Head of caudate nucleus (tissue), 42 donors: ENCODE measurements at regions of chr11 and their contacts with region 1.

Region 1: DNA sequence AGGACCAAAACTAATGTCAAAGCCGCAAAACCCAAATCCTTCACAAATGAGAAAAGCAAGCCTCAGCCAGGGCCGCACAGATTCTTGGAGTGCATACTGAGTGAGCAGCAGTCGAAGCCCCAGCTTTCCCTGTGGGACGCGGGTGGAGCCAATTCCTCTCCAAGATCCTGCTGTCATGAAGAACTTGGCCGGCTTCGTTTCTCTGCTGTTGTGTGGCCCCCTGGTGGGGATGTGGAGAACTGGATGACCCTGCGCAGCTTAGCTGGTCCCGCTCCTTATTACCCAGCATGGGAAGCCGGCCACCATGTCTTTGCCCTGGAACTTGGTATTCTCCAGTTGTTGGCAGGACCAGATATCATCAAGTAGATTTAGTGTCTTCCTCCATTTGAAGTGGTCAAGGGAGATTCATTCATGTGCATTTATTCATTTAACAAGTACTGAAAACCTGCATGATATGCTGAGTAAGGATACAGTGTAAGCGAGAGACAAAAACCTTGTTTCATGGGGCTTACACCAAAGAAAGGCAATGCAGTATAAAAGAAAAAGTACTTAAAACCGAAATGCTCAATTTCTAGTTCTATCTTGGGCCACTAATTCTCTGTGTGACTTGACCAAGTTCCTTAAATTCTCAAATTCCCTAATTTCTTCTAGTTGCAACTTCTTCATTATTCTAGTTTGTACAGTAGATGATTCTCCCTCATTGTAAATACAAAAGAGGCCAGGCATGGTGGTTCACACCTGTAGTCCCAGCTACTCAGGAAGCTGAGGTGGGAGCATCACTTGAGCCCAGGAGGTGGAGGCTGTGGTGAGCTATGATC is 56.7 kb upstream of the CRTAM start:
- DNase-seq: peak; percentile 76 to 95 (median 89)

Region 2: GRCh38 chr11:122578168-122578825 is 203.3 kb before region 1 on chr11:
- intact Hi-C with region 1: loop called (anchors 1 kb)
- DNase-seq: no peak

Region 3: DNA sequence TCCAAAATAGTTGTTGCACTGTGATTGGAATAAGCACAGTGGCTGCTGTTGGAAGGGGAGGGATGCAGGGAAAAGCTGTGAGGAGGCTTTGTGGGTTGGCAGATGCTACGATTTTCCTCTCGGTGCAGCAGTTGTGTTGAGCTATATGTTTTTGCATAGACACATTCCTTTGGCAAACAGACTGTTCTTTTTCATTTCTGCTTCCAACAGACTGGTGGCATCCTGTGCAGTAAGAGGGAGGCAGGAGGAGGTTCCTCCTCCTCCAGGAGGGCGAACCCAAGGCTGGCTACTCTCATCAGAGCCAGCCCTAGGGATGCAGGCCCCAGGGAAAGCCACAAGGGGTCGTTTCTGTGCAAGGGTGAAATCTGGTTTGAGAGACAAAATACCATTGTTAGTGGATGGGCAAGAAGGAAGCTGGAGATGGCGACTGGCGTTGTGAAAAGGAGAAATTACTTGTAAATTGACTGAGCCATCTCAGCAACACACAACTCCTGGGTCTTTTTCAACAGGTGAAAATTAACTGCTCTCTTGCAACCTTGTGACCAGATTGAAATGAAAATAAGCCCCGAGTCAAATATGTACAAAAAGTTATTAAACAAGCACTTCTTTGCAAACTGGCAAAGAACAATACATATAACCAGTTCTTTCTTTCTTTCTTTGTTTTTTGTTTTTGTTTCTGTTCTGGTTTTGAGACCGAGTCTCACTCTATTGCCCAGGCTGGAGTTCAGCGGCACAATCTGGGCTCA is 152.6 kb before region 1 on chr11:
- intact Hi-C with region 1: loop called (anchors 2 kb)
- DNase-seq: peak; percentile 48 to 88 (median 76)

Region 4: DNA sequence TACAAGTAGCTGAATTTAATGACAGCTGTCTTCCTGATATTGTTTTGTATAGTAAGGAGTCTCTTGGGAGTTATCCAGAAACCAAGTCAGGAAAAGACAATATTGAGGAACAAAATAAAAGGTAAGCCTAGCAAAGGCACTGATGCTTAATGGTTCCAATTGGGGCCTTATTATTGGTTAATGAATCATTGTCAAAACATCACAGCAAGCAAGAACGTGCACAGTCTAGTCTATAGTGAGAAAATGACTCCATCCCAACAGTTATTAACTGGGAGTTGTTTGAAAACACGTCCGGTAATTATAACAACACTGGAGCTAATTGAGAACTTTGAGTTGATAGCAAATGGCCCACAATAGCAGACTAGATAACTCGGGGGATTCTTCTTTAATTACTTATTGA is 182.4 kb after region 1 on chr11:
- intact Hi-C with region 1: no loop called
- DNase-seq: no peak